ENCODE measurements at regions of chr1 and their contacts with region 1.

Region 1: DNA sequence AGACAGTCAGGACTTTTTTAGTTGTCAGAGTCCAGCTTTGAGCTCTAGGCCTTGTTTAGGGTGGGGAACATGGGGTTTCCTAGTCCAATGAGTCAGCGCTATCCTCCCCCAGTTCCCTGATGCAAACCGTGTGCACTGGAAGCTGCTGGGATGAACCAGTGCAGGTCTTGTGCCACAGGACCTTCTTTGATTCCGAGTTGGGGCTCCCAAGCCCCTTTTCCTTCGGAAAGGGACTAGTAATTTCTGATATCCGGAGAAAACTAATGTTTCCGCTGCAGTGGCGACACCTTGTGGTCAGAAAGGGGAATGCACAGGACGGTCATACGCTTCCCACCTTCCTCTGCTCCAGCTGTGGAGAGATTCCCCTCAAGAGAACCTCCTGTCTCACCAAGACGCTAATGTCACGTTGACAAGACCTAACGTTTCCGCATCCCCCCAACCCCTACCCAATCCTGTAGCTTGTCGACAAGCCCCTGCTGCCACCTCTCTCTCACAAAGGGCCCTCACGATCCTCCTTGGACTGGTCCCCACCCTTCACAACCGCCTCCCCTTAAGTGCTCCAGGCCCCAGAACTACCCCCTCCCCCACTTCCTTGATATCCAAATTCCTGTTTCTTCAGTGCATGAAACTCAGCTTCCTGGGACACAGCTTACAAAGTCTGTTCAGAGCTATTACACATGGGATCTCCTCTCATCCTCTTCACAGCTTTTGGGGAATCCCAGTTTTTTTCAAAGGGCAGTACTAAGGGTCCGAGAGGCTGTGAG is 30.9 kb downstream of the GPA33 start:
- DNase-seq: peak; percentile 84
- H3K4me3 ChIP-seq: no peak overlapping the region
- H3K27ac ChIP-seq: no peak overlapping the region
- H3K4me1 ChIP-seq: no peaks in the 10 kb centered on the region
- H3K27me3 ChIP-seq: no peaks in the 10 kb centered on the region
- CTCF ChIP-seq: peak; percentile 94

Region 2: DNA sequence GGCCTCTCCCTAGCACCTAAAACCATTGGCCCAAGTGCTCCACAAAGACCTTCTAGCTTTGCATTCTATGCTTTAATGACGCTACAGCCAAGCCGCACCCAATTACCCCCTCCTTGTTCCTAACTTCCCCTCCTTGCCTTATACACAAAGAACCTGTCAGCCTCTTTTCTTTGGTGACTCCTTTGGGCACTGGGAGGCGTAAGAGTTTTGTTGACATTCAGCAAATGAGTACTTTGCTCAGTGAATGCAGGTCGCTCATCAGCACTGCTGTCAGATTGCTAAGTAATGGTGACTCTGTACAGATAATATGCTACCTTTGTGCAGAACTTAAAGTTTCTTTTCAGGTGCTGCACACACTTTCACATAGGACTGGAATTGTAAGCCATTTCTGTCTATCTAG is 704.8 kb before region 1 on chr1:
- CTCF ChIA-PET with region 1: no interaction called
- POLR2A ChIA-PET with region 1: no interaction called
- intact Hi-C with region 1: no loop called
- DNase-seq: peak; percentile 2
- H3K4me3 ChIP-seq: no peak overlapping the region
- H3K27ac ChIP-seq: no peak overlapping the region
- H3K4me1 ChIP-seq: no peaks in the 10 kb centered on the region
- H3K27me3 ChIP-seq: peaks cover 4% of the 10 kb centered on the region
- CTCF ChIP-seq: no peak

Region 3: DNA sequence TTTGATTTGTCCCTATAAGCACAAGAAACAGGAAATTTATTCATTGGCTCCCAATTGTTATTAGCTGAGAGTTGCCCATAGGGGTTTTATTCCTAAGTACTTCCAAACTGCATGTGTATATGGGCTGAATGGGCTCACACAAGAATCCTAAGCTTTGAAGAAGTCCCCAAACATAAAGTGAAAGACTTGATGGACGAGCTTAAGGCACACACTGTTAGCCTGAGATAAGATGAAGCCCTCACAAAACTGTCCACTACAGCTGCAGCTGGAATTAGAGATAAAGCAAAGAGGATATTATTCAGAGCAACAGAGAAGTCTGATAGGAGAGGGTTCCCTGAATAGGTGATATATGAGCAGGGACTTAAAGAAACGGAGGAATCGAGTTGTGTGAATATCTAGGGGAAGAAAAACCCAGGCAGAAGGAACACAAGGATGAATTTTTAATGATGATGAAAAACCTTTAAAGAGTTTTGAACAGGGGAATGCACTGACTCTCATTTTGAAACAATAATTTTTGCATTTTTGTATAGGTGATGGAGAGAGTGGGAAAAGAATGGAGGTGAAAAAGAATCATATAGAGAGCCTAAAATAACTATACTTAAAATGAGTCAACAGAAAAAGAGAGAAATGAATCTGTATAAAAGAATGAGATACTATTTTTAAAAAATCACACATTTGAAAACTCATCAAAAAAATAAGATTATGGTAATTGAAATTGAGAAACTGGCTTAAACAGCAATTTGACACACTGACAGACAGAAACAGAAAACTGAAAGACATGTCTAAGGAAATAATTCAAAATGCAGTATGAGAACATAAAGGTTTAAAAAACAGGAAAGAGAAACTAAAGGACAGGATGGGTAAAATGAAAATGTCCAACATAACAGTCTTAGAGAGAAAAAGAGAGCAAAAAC is 353.6 kb before region 1 on chr1:
- CTCF ChIA-PET with region 1: no interaction called
- POLR2A ChIA-PET with region 1: no interaction called
- intact Hi-C with region 1: no loop called
- DNase-seq: no peak
- H3K4me3 ChIP-seq: no peak overlapping the region
- H3K27ac ChIP-seq: no peak overlapping the region
- H3K4me1 ChIP-seq: no peaks in the 10 kb centered on the region
- H3K27me3 ChIP-seq: peaks cover 26% of the 10 kb centered on the region
- CTCF ChIP-seq: no peak

Region 4: DNA sequence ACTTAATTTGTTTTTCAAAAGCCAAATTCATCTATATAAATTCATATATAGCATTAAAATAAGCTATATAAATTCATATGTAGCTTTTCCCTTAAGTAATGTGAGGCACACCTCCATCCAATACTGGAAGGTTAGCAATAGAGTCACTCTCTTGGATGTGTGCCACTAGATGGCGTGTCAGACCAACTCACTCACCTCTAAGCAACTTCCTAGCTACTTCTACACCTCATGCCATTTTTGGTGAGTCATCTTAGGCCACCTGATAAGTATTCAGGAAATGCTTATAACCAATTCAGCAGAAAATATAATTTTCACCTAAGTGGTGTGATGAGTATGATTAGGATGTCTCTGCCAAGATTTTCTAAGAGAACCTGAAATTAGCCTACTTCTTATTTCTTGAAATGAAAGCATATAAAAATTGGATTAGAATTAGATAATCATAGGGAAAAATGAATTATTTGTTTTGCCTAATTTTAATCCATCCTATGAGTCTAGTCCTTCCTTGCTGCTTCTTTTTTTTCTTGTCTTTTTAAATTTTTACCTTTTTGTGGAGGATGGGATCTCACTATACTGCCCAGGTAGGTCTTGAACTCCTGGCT is 148.7 kb before region 1 on chr1:
- CTCF ChIA-PET with region 1: interaction called, 41 read pairs
- POLR2A ChIA-PET with region 1: no interaction called
- intact Hi-C with region 1: loop called (anchors 1 kb)
- DNase-seq: peak; percentile 83
- H3K4me3 ChIP-seq: no peak overlapping the region
- H3K27ac ChIP-seq: no peak overlapping the region
- H3K4me1 ChIP-seq: no peaks in the 10 kb centered on the region
- H3K27me3 ChIP-seq: peaks cover 33% of the 10 kb centered on the region
- CTCF ChIP-seq: peak; percentile 89

Region 5: DNA sequence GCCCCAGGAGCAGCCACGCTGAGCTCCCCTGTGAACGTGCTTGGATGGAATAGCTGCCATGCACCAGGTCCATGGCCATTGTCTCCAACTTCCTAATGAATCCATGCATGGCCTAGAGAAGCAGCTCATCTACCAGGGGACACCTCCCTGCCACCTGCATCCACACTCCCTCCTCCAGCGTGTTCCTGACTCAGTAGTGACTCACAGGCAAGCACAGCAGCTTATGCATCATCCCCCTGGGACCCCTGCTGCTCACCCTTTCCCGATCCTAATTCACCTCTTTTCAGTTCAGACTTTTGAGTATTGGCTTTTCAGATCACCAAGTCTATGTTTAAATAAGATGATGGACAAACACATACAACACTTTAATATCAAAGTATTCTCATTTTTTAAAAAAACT is 143.3 kb before region 1 on chr1:
- CTCF ChIA-PET with region 1: interaction called, 33 read pairs
- POLR2A ChIA-PET with region 1: no interaction called
- intact Hi-C with region 1: loop called (anchors 2 kb)
- DNase-seq: peak; percentile 40
- H3K4me3 ChIP-seq: no peak overlapping the region
- H3K27ac ChIP-seq: no peak overlapping the region
- H3K4me1 ChIP-seq: no peaks in the 10 kb centered on the region
- H3K27me3 ChIP-seq: peaks cover 73% of the 10 kb centered on the region
- CTCF ChIP-seq: no peak

Region 6: DNA sequence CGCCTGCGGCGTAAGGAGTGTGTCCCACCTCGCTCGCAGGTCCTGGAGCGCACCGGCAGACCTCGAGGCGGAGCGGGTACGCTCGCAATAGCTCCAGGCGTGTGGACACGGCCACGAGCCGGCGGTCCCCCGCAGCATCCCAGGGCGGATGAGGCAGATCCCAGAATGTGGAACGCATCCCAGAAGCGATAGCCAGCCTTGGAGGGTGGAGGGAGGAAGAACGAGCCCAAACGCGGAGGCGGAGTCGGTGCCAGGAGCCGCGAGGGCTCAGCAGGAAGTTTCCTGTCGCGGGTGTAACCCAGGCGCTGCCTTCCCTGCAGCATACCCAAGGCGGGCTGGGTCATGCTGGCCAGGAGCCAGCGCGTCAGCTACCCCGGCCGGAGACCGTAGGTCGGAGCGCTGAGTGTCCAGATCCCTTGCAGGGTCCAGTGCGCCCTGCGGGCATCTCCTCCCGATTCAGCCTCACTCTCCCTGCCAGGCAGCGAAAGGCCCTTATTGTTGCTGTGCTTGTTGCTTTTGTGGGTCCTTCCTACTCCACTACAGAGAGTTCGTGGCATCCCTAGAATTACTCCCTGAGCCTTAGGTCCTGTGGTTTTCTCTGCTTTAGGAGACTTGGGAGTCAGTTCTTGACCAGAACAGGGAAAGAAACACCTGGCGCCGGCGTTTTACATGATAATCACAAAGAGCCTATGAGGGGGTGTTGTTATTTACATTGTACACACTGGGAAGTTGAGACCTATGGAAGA is 62.3 kb after region 1 on chr1:
- CTCF ChIA-PET with region 1: no interaction called
- POLR2A ChIA-PET with region 1: no interaction called
- intact Hi-C with region 1: no loop called
- DNase-seq: peak; percentile 92
- H3K4me3 ChIP-seq: peak overlapping the region; percentile 49
- H3K27ac ChIP-seq: peak overlapping the region; percentile 0
- H3K4me1 ChIP-seq: peaks cover 23% of the 10 kb centered on the region
- H3K27me3 ChIP-seq: no peaks in the 10 kb centered on the region
- CTCF ChIP-seq: no peak